ENCODE measurements at regions of chr1 and their contacts with region 1.

Region 1: GRCh38 chr1:150979092-150980056 is 2.7 kb upstream of the ANXA9 start:
- DNase-seq: peak; percentile 61 to 95
- H3K4me3 ChIP-seq: no peak overlapping the region; a peak in 1 of 8 replicates
- H3K27ac ChIP-seq: no peak overlapping the region
- H3K4me1 ChIP-seq: peaks cover 9 to 42% (median 33%) of the 10 kb centered on the region in 4 experiments
- H3K27me3 ChIP-seq: no peaks in the 10 kb centered on the region
- CTCF ChIP-seq: peak; percentile 99 to 100 (median 100)
- EP300 ChIP-seq: peak in 1 of 2 experiments; percentile 55; a peak in 1 of 3 replicates
- POLR2A ChIP-seq: no peak
- RAD21 ChIP-seq: peak; percentile 71 to 85

Region 2: GRCh38 chr1:150922519-150922975 is 56.8 kb before region 1 on chr1:
- CTCF ChIA-PET with region 1: interaction called, 10 read pairs
- POLR2A ChIA-PET with region 1: interaction called, 3 read pairs
- DNase-seq: peak; percentile 15 to 70
- H3K4me3 ChIP-seq: no peak overlapping the region
- H3K27ac ChIP-seq: no peak overlapping the region
- H3K4me1 ChIP-seq: peaks cover 0 to 4% (median 0%) of the 10 kb centered on the region in 4 experiments; a peak in 2 of 7 replicates
- H3K27me3 ChIP-seq: no peaks in the 10 kb centered on the region
- CTCF ChIP-seq: peak; percentile 25 to 80 (median 56)
- EP300 ChIP-seq: no peak
- POLR2A ChIP-seq: no peak
- RAD21 ChIP-seq: peak; percentile 66 to 72

Region 3: GRCh38 chr1:150955280-150955679 is 24.1 kb before region 1 on chr1:
- CTCF ChIA-PET with region 1: interaction called, 17 read pairs
- POLR2A ChIA-PET with region 1: interaction called, 8 read pairs
- DNase-seq: no peak
- H3K4me3 ChIP-seq: no peak overlapping the region
- H3K27ac ChIP-seq: no peak overlapping the region
- H3K4me1 ChIP-seq: no peaks in the 10 kb centered on the region
- H3K27me3 ChIP-seq: no peaks in the 10 kb centered on the region
- CTCF ChIP-seq: no peak
- EP300 ChIP-seq: no peak
- POLR2A ChIP-seq: no peak
- RAD21 ChIP-seq: no peak

Region 4: DNA sequence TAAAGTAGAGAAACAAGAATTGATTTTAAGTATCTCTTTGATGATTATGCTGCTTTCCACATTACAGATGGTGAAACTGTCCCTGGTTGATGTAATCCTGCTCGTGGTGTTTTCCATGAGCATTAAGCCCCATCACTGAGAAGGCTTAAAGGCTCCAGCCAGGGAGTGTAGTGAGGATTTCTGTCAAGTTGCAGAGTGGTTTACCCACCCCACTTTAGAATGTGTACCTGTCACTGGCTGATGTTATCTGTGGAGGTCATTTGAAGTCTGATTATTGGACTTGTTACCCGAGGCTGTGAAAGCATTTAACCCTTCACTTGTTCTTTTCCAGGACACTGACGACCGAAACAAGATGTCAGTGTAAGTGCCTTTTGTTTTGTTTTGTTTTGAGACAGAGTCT is 17.6 kb before region 1 on chr1:
- CTCF ChIA-PET with region 1: interaction called, 27 read pairs
- POLR2A ChIA-PET with region 1: interaction called, 58 read pairs
- DNase-seq: no peak
- H3K4me3 ChIP-seq: no peak overlapping the region
- H3K27ac ChIP-seq: no peak overlapping the region
- H3K4me1 ChIP-seq: no peaks in the 10 kb centered on the region
- H3K27me3 ChIP-seq: no peaks in the 10 kb centered on the region
- CTCF ChIP-seq: no peak
- EP300 ChIP-seq: no peak
- POLR2A ChIP-seq: no peak
- RAD21 ChIP-seq: no peak

Region 5: DNA sequence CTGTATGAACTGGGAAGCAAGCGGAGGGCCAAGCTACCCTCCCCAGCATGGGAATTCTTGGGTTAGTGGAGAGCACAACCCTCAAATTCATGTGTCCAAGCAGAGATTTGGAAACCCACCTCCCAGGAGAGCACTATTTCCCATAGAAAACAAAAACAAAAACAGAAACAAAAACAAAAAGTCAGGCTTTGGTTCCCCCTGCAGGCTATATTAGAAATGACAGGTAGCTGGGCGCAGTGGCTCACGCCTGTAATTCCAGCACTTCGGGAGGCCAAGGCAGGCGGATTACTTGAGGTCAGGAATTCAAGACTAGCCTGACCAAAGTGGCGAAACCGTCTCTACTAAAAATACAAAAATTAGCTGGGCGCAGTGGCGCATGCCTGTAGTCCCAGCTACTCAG is 16.5 kb after region 1 on chr1:
- CTCF ChIA-PET with region 1: interaction called, 183 read pairs
- POLR2A ChIA-PET with region 1: interaction called, 44 read pairs
- DNase-seq: peak in 1 of 2 experiments; percentile 81
- H3K4me3 ChIP-seq: no peak overlapping the region
- H3K27ac ChIP-seq: 0 out of 2 replicates have a peak overlapping the region, but pooled peaks have one; percentile 51
- H3K4me1 ChIP-seq: peaks cover 0 to 4% (median 0%) of the 10 kb centered on the region in 4 experiments; a peak in 1 of 7 replicates
- H3K27me3 ChIP-seq: no peaks in the 10 kb centered on the region
- CTCF ChIP-seq: peak; percentile 44 to 71 (median 62)
- EP300 ChIP-seq: no peak
- POLR2A ChIP-seq: no peak
- RAD21 ChIP-seq: peak; percentile 73 to 76

Region 6: DNA sequence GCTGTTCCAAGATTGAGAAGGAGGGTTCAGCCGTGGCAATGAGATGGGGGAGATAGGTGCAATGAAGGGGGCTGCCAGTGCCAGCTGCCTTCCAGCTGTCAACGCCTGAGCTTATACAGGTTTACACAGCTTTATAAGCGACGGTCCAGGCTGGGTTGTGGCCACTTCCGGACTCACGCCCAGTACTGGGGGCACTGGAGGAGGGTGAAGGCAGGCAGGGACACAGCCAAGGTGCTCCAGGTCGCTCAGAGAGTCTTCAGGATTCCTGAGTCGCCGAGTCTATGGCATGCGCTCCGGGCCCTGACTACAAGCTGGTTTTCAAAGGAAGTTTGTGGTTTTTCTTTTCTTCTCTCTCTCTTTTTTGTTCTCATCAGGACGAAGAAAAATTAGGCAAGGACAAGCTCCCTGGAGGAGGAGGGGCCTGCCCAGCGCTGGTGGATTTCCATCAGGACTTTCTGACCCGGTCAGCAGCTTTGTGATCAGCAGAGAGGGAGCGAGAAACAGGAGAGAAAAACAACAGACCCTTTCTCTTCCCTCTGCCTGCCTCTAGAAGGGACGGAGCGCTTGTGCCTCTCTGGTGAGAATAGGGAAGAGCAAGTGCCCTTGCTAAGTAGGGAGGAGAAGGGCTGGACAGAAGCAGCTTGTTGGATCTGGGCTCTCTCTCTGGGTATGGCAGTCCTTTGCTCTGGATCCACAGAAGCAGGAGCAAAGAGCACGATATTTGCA is 27.1 kb after region 1 on chr1 and contains the start of gene MINDY1:
- CTCF ChIA-PET with region 1: interaction called, 142 read pairs
- POLR2A ChIA-PET with region 1: interaction called, 28 read pairs
- DNase-seq: peak; percentile 33 to 67
- H3K4me3 ChIP-seq: peak within 1 kb of the TSS; percentile 6 to 94 (median 41); a peak in 7 of 8 replicates
- H3K27ac ChIP-seq: peak within 1 kb of the TSS; percentile 53
- H3K4me1 ChIP-seq: peaks cover 9 to 12% (median 9%) of the 10 kb centered on the region in 4 experiments; a peak in 6 of 7 replicates
- H3K27me3 ChIP-seq: no peaks in the 10 kb centered on the region
- CTCF ChIP-seq: peak; percentile 53 to 70 (median 62)
- EP300 ChIP-seq: no peak
- POLR2A ChIP-seq: peak; percentile 43 to 84
- RAD21 ChIP-seq: peak; percentile 59 to 66
- total RNA-seq, gene MINDY1: 10.6 and 11.4 TPM in 2 replicates

Region 7: DNA sequence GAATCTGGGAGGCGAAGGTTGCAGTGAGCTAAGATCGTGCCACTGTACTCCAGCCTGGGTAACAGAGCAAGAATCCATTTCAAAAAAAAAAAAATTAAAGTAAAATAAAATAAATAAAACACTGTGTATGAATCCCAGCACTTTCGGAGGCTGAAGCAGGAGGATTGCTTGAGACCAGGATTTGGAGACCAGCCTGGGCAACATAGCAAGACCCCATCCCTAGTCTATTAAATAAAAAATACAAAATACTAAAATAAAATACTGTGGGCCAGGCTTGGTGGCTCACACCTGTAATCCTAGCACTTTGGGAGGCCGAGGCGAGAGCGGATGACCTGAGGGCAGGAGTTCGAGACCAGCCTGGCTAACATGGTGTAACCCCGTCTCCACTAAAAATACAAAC is 52.8 kb after region 1 on chr1:
- CTCF ChIA-PET with region 1: no interaction called
- POLR2A ChIA-PET with region 1: no interaction called
- DNase-seq: no peak
- H3K4me3 ChIP-seq: no peak overlapping the region
- H3K27ac ChIP-seq: no peak overlapping the region
- H3K4me1 ChIP-seq: peaks cover 0 to 3% (median 0%) of the 10 kb centered on the region in 4 experiments; a peak in 3 of 7 replicates
- H3K27me3 ChIP-seq: no peaks in the 10 kb centered on the region
- CTCF ChIP-seq: no peak
- EP300 ChIP-seq: no peak
- POLR2A ChIP-seq: no peak
- RAD21 ChIP-seq: no peak

Region 8: DNA sequence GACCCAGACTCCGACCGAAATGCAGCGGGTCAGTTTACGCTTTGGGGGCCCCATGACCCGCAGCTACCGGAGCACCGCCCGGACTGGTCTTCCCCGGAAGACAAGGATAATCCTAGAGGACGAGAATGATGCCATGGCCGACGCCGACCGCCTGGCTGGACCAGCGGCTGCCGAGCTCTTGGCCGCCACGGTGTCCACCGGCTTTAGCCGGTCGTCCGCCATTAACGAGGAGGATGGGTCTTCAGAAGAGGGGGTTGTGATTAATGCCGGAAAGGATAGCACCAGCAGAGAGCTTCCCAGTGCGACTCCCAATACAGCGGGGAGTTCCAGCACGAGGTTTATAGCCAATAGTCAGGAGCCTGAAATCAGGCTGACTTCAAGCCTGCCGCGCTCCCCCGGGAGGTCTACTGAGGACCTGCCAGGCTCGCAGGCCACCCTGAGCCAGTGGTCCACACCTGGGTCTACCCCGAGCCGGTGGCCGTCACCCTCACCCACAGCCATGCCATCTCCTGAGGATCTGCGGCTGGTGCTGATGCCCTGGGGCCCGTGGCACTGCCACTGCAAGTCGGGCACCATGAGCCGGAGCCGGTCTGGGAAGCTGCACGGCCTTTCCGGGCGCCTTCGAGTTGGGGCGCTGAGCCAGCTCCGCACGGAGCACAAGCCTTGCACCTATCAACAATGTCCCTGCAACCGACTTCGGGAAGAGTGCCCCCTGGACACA is 68.7 kb after region 1 on chr1:
- CTCF ChIA-PET with region 1: no interaction called
- POLR2A ChIA-PET with region 1: interaction called, 12 read pairs
- DNase-seq: peak in 1 of 2 experiments; percentile 85
- H3K4me3 ChIP-seq: peak overlapping the region; percentile 70 to 96 (median 84)
- H3K27ac ChIP-seq: peak overlapping the region; percentile 60
- H3K4me1 ChIP-seq: peaks cover 0 to 7% (median 3%) of the 10 kb centered on the region in 4 experiments; a peak in 4 of 7 replicates
- H3K27me3 ChIP-seq: no peaks in the 10 kb centered on the region
- CTCF ChIP-seq: peak; percentile 73 to 84 (median 82)
- EP300 ChIP-seq: no peak
- POLR2A ChIP-seq: peak; percentile 53 to 79
- RAD21 ChIP-seq: peak in 1 of 2 experiments; percentile 23; a peak in 2 of 4 replicates

Region 9: GRCh38 chr1:151137789-151138188 is 158.4 kb after region 1 on chr1:
- CTCF ChIA-PET with region 1: no interaction called
- POLR2A ChIA-PET with region 1: no interaction called
- DNase-seq: no peak
- H3K4me3 ChIP-seq: no peak overlapping the region
- H3K27ac ChIP-seq: no peak overlapping the region
- H3K4me1 ChIP-seq: peaks cover 0 to 10% (median 6%) of the 10 kb centered on the region in 4 experiments; a peak in 5 of 7 replicates
- H3K27me3 ChIP-seq: peaks cover 0 to 14% (median 8%) of the 10 kb centered on the region in 4 experiments; a peak in 5 of 7 replicates
- CTCF ChIP-seq: no peak
- EP300 ChIP-seq: no peak
- POLR2A ChIP-seq: no peak
- RAD21 ChIP-seq: no peak

Measured in H1 (cell line).